ENCODE measurements at regions of chr2 and their contacts with region 1.

Region 1: GRCh38 chr2:237744613-237745249 is 53.8 kb upstream of the RBM44 start:
- DNase-seq: no peak
- H3K4me3 ChIP-seq: no peak overlapping the region
- H3K27ac ChIP-seq: peak overlapping the region; percentile 59 to 86 (median 78)
- H3K4me1 ChIP-seq: peaks cover 55 to 70% (median 66%) of the 10 kb centered on the region in 4 donors
- H3K27me3 ChIP-seq: no peaks in the 10 kb centered on the region
- CTCF ChIP-seq: peak in 2 of 3 experiments; percentile 99
- EP300 ChIP-seq: no peak
- POLR2A ChIP-seq: no peak

Region 2: DNA sequence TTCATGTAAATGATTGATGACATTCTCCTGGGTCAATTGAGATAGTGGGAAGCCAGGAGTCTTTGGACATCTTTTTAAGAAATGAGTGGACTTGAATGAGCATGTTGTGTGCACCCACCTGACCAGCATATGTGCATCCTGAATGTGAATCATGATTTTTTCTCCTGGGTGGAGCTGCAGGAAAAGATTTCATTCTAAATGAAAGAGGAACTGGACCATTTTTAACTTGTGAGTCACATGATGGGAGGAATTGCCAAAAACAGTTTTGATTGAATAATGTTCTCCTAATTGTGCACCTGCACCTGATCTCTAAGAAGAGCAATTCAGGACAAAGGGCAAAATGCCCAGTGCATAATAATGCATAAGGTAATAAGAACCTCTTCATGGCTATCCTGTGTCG is 626.7 kb before region 1 on chr2:
- intact Hi-C with region 1: loop called (anchors 10 kb)
- DNase-seq: no peak
- H3K4me3 ChIP-seq: no peak overlapping the region
- H3K27ac ChIP-seq: peak overlapping the region in 2 of 4 donors; percentile 45 to 56
- H3K4me1 ChIP-seq: peaks cover 0 to 20% (median 15%) of the 10 kb centered on the region in 4 donors
- H3K27me3 ChIP-seq: no peaks in the 10 kb centered on the region
- CTCF ChIP-seq: no peak
- EP300 ChIP-seq: no peak
- POLR2A ChIP-seq: no peak

Region 3: GRCh38 chr2:237512774-237513466 is 231.8 kb before region 1 on chr2:
- intact Hi-C with region 1: loop called (anchors 10 kb)
- DNase-seq: peak; percentile 95
- H3K4me3 ChIP-seq: no peak overlapping the region
- H3K27ac ChIP-seq: peak overlapping the region in 2 of 4 donors; percentile 13 to 60
- H3K4me1 ChIP-seq: peaks cover 30 to 40% (median 34%) of the 10 kb centered on the region in 4 donors
- H3K27me3 ChIP-seq: no peaks in the 10 kb centered on the region
- CTCF ChIP-seq: peak; percentile 85 to 93 (median 89)
- EP300 ChIP-seq: no peak
- POLR2A ChIP-seq: no peak

Region 4: GRCh38 chr2:237581751-237582746 is 162.7 kb before region 1 on chr2:
- intact Hi-C with region 1: loop called (anchors 2 kb)
- DNase-seq: no peak
- H3K4me3 ChIP-seq: peak overlapping the region; percentile 35 to 48 (median 38)
- H3K27ac ChIP-seq: peak overlapping the region; percentile 71 to 81 (median 74)
- H3K4me1 ChIP-seq: peaks cover 14 to 20% (median 18%) of the 10 kb centered on the region in 4 donors
- H3K27me3 ChIP-seq: no peaks in the 10 kb centered on the region
- CTCF ChIP-seq: peak; percentile 47 to 70 (median 60)
- EP300 ChIP-seq: no peak
- POLR2A ChIP-seq: no peak

Region 5: GRCh38 chr2:237674731-237675276 is 69.9 kb before region 1 on chr2:
- intact Hi-C with region 1: loop called (anchors 5 kb)
- DNase-seq: no peak
- H3K4me3 ChIP-seq: peak overlapping the region; percentile 36 to 45 (median 37)
- H3K27ac ChIP-seq: peak overlapping the region; percentile 78 to 87 (median 82)
- H3K4me1 ChIP-seq: peaks cover 71 to 84% (median 78%) of the 10 kb centered on the region in 4 donors
- H3K27me3 ChIP-seq: no peaks in the 10 kb centered on the region
- CTCF ChIP-seq: no peak
- EP300 ChIP-seq: peak; percentile 68
- POLR2A ChIP-seq: no peak